MCF 10A (cell line): ENCODE measurements at regions of chr1 and their contacts with region 1.

Region 1: DNA sequence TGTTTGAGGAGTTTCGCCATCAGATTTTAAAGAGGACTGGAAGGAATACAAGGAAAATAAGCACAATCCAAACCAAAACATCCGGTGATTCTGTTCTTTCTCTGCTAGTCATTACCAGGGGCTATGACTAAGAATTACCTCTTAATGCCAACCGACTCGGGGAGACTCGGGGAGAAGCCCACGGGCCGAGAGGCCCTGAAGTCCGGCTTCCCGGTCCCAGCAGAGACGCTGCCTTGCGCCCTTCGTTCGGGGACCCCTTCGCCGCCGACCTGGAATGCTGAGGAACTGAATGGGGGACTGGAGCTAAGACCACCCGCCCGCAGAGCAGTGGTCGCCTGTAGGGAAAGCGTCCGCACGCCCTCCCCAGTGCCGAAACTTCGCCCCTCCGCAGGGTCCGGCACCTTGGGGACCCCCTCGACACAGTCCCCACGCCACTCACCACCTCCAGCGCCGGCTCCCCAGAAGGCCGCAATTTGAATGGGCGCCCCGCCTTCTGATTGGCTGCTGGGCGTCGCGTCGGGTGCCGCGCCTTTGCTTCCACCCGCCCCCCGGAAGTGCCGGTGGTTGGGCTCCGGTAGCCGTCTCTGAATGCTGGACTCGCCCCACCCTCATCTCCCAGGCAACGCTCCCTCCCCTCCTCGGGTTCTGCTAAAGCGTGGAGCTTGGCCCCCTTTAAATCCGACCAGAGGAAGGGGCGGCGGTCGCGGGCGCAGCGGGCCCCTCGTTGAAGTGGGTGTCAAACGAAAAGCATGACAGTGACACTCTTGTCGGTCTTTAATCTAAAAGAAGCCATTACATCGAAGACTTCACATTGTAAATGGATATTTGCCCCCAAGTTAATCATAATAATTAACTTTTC is at the start of gene KIF14:
- DNase-seq: peak; percentile 99
- H3K4me3 Mint-ChIP-seq: peak within 1 kb of the TSS; percentile 96
- H3K27ac Mint-ChIP-seq: peak within 1 kb of the TSS; percentile 97
- H3K4me1 Mint-ChIP-seq: peaks cover 48% of the 10 kb centered on the region
- H3K27me3 Mint-ChIP-seq: no peaks in the 10 kb centered on the region
- CTCF ChIP-seq: no peak
- total RNA-seq, gene KIF14: 13.4 and 25.5 TPM in 2 replicates

Region 2: DNA sequence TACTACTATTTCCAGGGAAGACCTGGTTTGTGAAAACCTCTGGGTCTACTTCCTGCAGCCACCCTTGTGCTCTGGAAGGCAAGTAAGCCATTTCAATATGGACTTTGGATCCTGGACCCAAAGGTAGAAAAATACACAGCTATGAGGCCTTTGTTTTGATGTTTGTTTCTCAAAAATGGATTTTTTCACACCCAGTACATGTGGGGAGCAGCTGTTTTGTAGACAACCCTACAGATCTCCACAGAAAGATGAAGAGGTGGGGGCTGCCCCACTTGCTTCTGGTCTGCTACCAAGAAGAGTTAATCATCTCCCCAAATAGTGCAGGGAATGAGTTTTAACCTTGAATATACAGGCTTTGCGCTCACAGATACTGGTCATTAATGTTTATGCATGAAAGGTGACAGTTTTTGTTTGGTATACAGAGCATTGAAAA is 239.9 kb before region 1 on chr1:
- CTCF ChIA-PET with region 1: no interaction called
- POLR2A ChIA-PET with region 1: no interaction called
- intact Hi-C with region 1: no loop called
- DNase-seq: no peak
- H3K4me3 Mint-ChIP-seq: no peak overlapping the region
- H3K27ac Mint-ChIP-seq: peak overlapping the region; percentile 71
- H3K4me1 Mint-ChIP-seq: peaks cover 45% of the 10 kb centered on the region
- H3K27me3 Mint-ChIP-seq: no peaks in the 10 kb centered on the region
- CTCF ChIP-seq: no peak

Region 3: GRCh38 chr1:200542162-200542561 is 78.3 kb before region 1 on chr1:
- CTCF ChIA-PET with region 1: no interaction called
- POLR2A ChIA-PET with region 1: no interaction called
- intact Hi-C with region 1: no loop called
- DNase-seq: no peak
- H3K4me3 Mint-ChIP-seq: no peak overlapping the region
- H3K27ac Mint-ChIP-seq: no peak overlapping the region
- H3K4me1 Mint-ChIP-seq: peaks cover 6% of the 10 kb centered on the region
- H3K27me3 Mint-ChIP-seq: no peaks in the 10 kb centered on the region
- CTCF ChIP-seq: no peak

Region 4: GRCh38 chr1:200639790-200640669 is 19.5 kb after region 1 on chr1:
- CTCF ChIA-PET with region 1: interaction called, 21 read pairs
- POLR2A ChIA-PET with region 1: interaction called, 28 read pairs
- intact Hi-C with region 1: no loop called
- DNase-seq: peak; percentile 95
- H3K4me3 Mint-ChIP-seq: peak overlapping the region; percentile 4
- H3K27ac Mint-ChIP-seq: peak overlapping the region; percentile 55
- H3K4me1 Mint-ChIP-seq: peaks cover 20% of the 10 kb centered on the region
- H3K27me3 Mint-ChIP-seq: no peaks in the 10 kb centered on the region
- CTCF ChIP-seq: no peak

Region 5: GRCh38 chr1:200774735-200775444 is 154.4 kb after region 1 on chr1:
- CTCF ChIA-PET with region 1: interaction called, 12 read pairs
- POLR2A ChIA-PET with region 1: interaction called, 12 read pairs
- intact Hi-C with region 1: no loop called
- DNase-seq: no peak
- H3K4me3 Mint-ChIP-seq: no peak overlapping the region
- H3K27ac Mint-ChIP-seq: peak overlapping the region; percentile 16
- H3K4me1 Mint-ChIP-seq: peaks cover 49% of the 10 kb centered on the region
- H3K27me3 Mint-ChIP-seq: no peaks in the 10 kb centered on the region
- CTCF ChIP-seq: no peak

Region 6: GRCh38 chr1:200811704-200812103 is 191.2 kb after region 1 on chr1:
- CTCF ChIA-PET with region 1: interaction called, 72 read pairs
- POLR2A ChIA-PET with region 1: interaction called, 7 read pairs
- intact Hi-C with region 1: no loop called
- DNase-seq: no peak
- H3K4me3 Mint-ChIP-seq: no peak overlapping the region
- H3K27ac Mint-ChIP-seq: peak overlapping the region; percentile 0
- H3K4me1 Mint-ChIP-seq: peaks cover 17% of the 10 kb centered on the region
- H3K27me3 Mint-ChIP-seq: no peaks in the 10 kb centered on the region
- CTCF ChIP-seq: no peak

Region 7: GRCh38 chr1:200845360-200845759 is 224.9 kb after region 1 on chr1:
- CTCF ChIA-PET with region 1: interaction called, 54 read pairs
- POLR2A ChIA-PET with region 1: interaction called, 5 read pairs
- intact Hi-C with region 1: no loop called
- DNase-seq: no peak
- H3K4me3 Mint-ChIP-seq: no peak overlapping the region
- H3K27ac Mint-ChIP-seq: no peak overlapping the region
- H3K4me1 Mint-ChIP-seq: peaks cover 8% of the 10 kb centered on the region
- H3K27me3 Mint-ChIP-seq: no peaks in the 10 kb centered on the region
- CTCF ChIP-seq: no peak